ENCODE measurements at regions of chr12 and their contacts with region 1.

Region 1: DNA sequence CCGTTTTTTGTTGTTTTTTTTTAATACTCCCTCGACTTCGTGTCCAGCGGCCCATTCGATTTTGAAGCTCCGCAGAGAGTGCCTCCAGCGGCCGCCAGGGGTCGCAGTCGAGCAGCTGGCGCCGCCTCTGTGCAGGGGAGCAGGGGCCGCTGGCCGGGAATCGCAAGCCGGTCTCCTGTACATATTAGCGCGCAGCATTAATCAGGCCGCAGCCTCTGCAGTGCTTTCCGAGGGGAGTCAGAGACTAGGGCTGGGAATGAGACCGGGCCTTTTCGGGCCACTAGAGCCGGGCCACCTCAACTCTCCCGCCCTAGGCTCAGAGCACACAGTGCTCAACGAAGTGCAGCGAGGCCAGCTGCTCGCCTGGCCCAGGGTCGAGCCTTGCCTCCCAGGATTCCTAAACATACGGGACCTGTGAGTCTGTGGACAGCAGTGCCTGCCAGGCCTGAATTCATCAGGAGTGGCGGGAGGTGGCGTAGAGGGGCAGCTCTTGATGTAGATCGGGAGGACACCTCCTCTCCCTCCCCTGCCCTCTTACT is 81.8 kb downstream of the EMP1 start:
- DNase-seq: peak; percentile 36
- H3K4me3 ChIP-seq: 0 out of 2 replicates have a peak overlapping the region, but pooled peaks have one; percentile 17
- H3K27ac ChIP-seq: no peak overlapping the region
- H3K27me3 ChIP-seq: peaks cover 41% of the 10 kb centered on the region
- CTCF ChIP-seq: peak; percentile 98

Region 2: GRCh38 chr12:13288937-13289652 is 10.8 kb after region 1 on chr12:
- CTCF ChIA-PET with region 1: interaction called, 12 read pairs
- POLR2A ChIA-PET with region 1: interaction called, 5 read pairs
- DNase-seq: no peak
- H3K4me3 ChIP-seq: no peak overlapping the region
- H3K27ac ChIP-seq: no peak overlapping the region
- H3K27me3 ChIP-seq: peaks cover 2% of the 10 kb centered on the region
- CTCF ChIP-seq: no peak

Region 3: GRCh38 chr12:13304924-13305323 is 26.6 kb after region 1 on chr12:
- CTCF ChIA-PET with region 1: interaction called, 15 read pairs
- POLR2A ChIA-PET with region 1: no interaction called
- DNase-seq: no peak
- H3K4me3 ChIP-seq: no peak overlapping the region
- H3K27ac ChIP-seq: no peak overlapping the region
- H3K27me3 ChIP-seq: no peaks in the 10 kb centered on the region
- CTCF ChIP-seq: no peak

Region 4: DNA sequence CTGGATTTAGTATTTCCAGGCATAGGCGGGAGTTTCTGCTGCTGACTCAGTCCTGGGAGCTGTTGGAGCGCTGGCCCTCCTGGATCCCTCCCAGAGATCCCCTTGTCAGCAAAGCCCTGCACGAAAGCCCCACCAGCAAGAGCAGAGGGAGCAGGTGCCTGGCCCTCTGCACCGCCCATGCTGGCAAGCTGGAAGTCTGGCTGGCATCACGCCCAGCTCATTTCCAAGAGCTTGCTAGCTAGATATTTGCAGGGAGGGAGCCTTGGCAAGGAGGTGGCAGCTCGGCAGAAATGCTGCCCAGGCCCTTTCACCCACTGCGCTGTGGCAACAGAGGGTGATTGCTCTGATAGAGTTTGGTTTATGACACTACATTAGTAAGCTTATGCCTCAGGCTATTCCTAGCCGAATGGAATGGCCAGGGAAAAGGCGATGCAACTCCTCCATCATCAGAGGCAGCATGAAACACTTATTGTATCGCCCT is 112.1 kb after region 1 on chr12:
- CTCF ChIA-PET with region 1: no interaction called
- POLR2A ChIA-PET with region 1: no interaction called
- DNase-seq: no peak
- H3K4me3 ChIP-seq: no peak overlapping the region
- H3K27ac ChIP-seq: no peak overlapping the region
- H3K27me3 ChIP-seq: no peaks in the 10 kb centered on the region
- CTCF ChIP-seq: no peak

Region 5: DNA sequence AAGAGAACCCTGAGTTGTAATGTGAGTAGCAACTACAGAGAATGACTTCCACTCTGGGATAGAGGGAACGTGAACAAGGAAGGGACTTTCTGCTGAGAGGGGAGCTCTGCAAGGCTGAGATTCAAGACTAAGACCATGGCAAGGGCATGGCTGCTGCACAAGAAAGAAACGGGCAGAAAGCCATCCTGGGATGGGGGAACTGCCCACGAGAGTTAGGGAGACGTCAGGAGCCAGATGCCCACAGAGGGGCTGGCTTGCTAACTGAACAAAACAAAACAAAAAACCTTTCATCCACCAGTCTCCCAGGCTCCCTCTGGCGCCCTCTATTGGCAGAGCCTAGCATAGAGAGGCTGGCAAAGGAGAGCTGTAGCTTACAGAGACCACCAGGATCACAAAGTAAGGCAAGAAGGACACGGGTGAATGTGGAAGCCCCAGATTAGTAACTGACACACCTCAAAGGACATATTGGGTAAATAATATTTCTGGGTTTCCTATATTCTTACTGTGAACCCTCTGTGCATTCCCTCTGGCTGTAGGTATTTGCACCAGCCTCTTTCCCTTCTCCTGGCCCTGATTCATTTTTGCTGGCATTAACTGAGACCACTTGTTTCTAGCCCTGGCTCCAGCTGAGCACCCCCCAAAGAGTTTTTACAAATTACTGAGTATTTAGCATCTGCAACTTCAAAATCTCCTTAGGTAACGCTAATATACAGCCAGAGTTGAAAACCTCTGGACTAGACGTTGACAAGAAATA is 256.5 kb after region 1 on chr12:
- CTCF ChIA-PET with region 1: interaction called, 27 read pairs
- POLR2A ChIA-PET with region 1: no interaction called
- DNase-seq: peak; percentile 10
- H3K4me3 ChIP-seq: peak overlapping the region; percentile 41
- H3K27ac ChIP-seq: no peak overlapping the region
- H3K27me3 ChIP-seq: no peaks in the 10 kb centered on the region
- CTCF ChIP-seq: peak; percentile 98

Region 6: DNA sequence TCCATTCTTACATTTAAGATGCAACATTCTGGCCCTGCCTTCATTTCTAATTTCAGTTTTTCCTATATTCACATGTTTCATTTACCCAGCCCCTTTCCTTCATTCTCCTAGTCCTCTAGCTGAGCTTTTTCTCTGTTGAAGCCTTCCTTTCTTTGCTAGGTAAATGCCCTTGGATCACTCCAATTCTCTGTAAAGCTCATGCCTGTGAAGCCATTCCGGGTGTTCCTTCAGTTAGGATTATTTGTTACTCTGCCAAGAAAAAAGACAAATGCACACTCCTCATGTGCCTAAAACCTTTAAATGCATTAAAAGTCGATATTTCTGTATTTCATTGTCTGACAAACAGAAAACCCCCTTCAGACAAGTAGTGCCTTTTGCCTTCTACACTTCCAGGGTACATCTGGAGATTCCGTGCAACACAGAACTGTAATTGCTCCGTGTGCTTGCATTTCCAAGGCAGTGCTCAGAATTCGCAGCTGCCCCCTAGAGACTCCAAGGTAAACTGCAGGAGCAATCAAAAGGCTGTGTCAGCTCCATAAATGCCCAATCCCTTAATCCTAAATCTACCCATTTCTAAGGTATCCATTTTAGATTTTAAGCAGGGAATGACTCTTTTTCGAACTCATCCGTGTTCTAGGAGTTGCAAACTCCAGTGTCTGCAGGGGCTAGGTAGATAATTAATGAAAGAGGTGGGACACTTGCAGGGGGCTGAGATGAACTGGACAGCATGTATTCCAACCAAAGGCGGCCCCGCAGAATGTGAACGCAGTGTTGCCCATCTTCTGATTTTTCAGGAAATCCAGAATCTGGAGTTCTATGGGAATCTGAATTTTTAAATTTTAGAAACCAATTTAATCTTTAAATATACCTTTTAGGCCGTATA is 382.9 kb after region 1 on chr12:
- CTCF ChIA-PET with region 1: interaction called, 13 read pairs
- POLR2A ChIA-PET with region 1: no interaction called
- DNase-seq: peak; percentile 3
- H3K4me3 ChIP-seq: no peak overlapping the region
- H3K27ac ChIP-seq: no peak overlapping the region
- H3K27me3 ChIP-seq: no peaks in the 10 kb centered on the region
- CTCF ChIP-seq: peak; percentile 86

Region 7: DNA sequence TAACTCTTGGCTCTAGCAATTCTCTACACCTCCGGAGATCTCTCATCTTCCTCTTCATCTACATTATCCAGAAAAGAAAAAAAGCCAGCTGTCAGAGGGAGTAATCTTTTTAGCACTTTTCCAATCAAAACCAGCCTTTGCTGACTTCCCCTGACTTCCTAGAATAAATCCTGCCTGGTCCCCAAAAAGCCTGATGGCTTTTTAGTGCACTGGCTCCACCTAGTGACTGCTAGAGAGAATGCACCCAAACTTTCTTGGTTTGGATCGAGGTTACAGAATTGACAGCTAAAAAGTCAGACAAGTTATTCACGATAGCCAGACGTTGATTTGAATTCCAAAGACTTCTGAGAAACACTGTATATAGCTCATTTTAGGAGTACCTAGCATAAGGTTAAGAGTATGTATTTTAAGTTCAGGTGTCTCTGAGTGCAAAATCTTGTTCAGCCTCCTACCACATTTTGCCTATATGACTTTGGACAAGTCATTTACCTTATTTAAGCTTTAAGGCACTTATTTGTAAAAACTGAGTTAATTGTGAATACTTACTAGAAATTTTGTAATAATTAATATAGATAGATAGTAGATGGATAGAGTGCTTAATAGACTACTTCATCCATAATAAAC is 888.8 kb after region 1 on chr12:
- CTCF ChIA-PET with region 1: interaction called, 20 read pairs
- POLR2A ChIA-PET with region 1: no interaction called
- DNase-seq: peak; percentile 24
- H3K4me3 ChIP-seq: no peak overlapping the region
- H3K27ac ChIP-seq: no peak overlapping the region
- H3K27me3 ChIP-seq: no peaks in the 10 kb centered on the region
- CTCF ChIP-seq: peak; percentile 98